PC-3 (cell line): ENCODE measurements at regions of chr9 and their contacts with region 1.

Region 1: GRCh38 chr9:24090566-24090965 is 264.5 kb upstream of the ELAVL2 start:
- DNase-seq: peak; percentile 41
- ATAC-seq: peak; percentile 76
- H3K4me3 ChIP-seq: no peak overlapping the region
- H3K27ac ChIP-seq: no peak overlapping the region
- H3K4me1 ChIP-seq: no peaks in the 10 kb centered on the region
- H3K27me3 ChIP-seq: no peaks in the 10 kb centered on the region
- CTCF ChIP-seq: peak; percentile 46; the same call in 1 of the 2 replicates

Region 2: DNA sequence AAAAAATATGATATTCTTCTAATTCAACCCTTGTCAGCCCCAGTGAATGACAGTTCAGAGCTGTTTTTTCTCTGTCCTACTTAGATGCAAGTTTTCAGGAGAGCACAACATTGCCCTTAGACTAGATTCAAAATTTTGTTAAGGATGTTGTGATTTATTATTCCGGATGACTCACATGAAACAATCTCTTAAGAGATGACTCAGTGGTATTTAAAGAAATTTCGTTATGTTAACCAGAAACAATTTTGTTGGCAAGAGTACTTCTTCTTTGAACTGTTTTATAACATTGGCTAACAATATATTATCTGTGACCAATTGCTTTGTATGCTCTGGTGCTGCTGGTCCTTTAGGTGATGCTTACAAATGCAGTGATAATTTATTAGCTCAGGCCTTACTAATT is 323.1 kb after region 1 on chr9:
- CTCF ChIA-PET with region 1: no interaction called
- POLR2A ChIA-PET with region 1: no interaction called
- intact Hi-C with region 1: loop called (anchors 10 kb)
- DNase-seq: peak; percentile 56
- ATAC-seq: peak; percentile 74
- H3K4me3 ChIP-seq: no peak overlapping the region
- H3K27ac ChIP-seq: 0 out of 2 replicates have a peak overlapping the region, but pooled peaks have one; percentile 2
- H3K4me1 ChIP-seq: peaks cover 3% of the 10 kb centered on the region; the same call in 1 of the 2 replicates
- H3K27me3 ChIP-seq: no peaks in the 10 kb centered on the region
- CTCF ChIP-seq: no peak